Activated T-helper 2 cell treated with anti-CD3 and anti-CD28 coated beads, Interferon-gamma antibody, Interleukin-2, Interleukin-4, amounts not matched to agents 10 μg/mL and 5 μg/mL and 100 μg/mL, durations not matched to agents 14 hours and 24 hours and 36 hours (primary cell): ENCODE measurements at regions of chr6 and their contacts with region 1.

Region 1: DNA sequence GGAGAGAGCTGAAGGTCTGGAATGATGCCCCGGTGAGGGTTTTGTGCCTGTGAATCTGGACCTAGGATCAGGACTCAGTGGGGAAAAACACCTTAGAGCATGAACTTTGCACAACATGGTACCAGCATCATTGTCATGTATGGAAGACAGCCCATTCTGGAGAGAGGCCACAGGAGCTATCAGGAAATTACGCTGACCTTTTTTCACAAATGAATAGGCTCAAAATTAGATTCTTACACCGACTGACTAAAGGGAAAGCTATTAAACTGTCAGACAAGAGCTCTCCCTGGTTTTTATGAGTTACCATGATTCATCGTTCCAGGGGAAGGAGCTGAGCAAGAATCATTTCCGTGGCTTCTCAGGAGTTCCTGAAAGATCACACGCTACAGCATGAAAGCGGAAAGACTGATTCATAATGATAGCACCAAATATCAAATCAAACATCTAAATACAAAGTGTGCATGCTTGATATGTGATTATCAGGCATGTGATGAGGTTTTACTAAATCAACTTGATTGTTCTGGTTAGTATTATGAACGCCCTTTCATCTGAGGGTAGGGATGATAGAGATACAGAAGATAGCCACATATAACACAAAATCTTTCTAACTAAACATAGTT is 224.9 kb upstream of the SMLR1 start:
- DNase-seq: no peak
- H3K4me3 Mint-ChIP-seq: no peak overlapping the region
- H3K27ac Mint-ChIP-seq: peak overlapping the region; percentile 35
- H3K4me1 Mint-ChIP-seq: peaks cover 33% of the 10 kb centered on the region
- H3K27me3 Mint-ChIP-seq: no peaks in the 10 kb centered on the region

Region 2: DNA sequence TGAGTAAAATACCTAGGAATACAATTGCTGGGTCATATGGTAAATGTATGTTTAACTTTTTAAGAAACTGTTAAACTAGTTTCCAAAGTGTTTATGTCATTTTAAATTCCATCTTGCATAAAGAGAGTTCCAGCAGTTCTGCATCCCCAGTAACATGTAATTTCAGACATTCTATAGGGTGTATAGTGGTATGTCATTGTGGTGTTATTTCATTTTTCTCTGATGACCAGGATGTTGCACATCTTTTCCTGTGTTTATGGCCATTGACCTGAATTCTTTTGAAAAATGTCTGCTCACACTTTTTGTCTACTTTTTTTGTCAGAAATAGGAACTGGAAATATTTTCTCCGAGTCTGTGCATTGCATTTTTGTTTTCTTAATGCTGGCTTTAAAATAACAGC is 107.5 kb before region 1 on chr6:
- intact Hi-C with region 1: no loop called
- DNase-seq: no peak
- H3K4me3 Mint-ChIP-seq: no peak overlapping the region
- H3K27ac Mint-ChIP-seq: no peak overlapping the region
- H3K4me1 Mint-ChIP-seq: peaks cover 5% of the 10 kb centered on the region
- H3K27me3 Mint-ChIP-seq: no peaks in the 10 kb centered on the region

Region 3: GRCh38 chr6:130587778-130588520 is 14.3 kb before region 1 on chr6:
- intact Hi-C with region 1: loop called (anchors 2 kb)
- DNase-seq: no peak
- H3K4me3 Mint-ChIP-seq: no peak overlapping the region
- H3K27ac Mint-ChIP-seq: peak overlapping the region; percentile 4
- H3K4me1 Mint-ChIP-seq: peaks cover 26% of the 10 kb centered on the region
- H3K27me3 Mint-ChIP-seq: no peaks in the 10 kb centered on the region

Region 4: GRCh38 chr6:130625825-130626527 is 23.7 kb after region 1 on chr6:
- intact Hi-C with region 1: loop called (anchors 1 kb)
- DNase-seq: no peak
- H3K4me3 Mint-ChIP-seq: peak overlapping the region; percentile 30
- H3K27ac Mint-ChIP-seq: peak overlapping the region; percentile 90
- H3K4me1 Mint-ChIP-seq: peaks cover 61% of the 10 kb centered on the region
- H3K27me3 Mint-ChIP-seq: no peaks in the 10 kb centered on the region